Left lung (tissue), 14 donors: ENCODE measurements at regions of chr11 and their contacts with region 1.

Region 1: DNA sequence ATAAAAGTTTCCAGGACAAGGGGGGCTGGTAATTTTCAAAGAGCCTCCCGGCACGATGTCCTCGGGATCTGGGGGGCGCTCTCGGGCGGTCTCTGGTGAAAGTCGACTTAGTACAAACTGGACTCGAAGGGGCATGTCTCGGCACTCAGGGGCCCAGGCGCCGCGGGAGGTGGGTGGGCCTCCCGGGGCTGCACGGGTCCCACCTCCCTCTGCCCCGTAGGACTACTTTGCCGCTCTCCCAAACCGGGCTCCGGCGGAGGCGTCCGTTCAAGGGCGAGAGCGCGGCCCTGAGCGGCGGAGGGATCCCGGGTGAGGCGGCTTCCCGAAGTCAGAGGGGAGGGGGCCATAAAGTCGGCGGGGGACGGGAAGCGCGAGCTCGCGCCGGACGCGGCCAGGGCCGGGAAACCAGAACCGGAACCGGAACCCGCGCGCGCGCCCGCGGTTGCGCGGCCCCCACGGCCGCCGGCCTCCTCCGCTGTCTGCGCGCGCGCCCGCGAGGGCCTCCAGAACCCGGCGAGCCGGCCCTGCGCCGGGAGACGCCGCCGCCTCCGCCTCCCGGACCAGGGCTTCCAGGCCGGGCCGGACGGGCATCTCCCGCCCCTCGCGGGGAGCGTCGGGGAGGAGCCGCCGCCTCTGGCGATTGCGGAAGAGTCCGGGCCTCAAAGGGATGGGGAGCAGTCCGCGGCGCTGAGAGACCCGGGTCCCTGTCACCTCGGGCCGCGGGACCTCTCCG is at the start of gene ARHGEF12:
- DNase-seq: peak; percentile 94 to 98 (median 96)
- ATAC-seq: peak; percentile 75
- H3K4me3 ChIP-seq: peak within 1 kb of the TSS; percentile 68 to 79
- H3K27ac ChIP-seq: peak within 1 kb of the TSS; percentile 91 to 97
- H3K4me1 ChIP-seq: peaks cover 15 to 37% of the 10 kb centered on the region in 2 donors
- H3K27me3 ChIP-seq: peaks cover 0 to 87% of the 10 kb centered on the region in 2 donors
- CTCF ChIP-seq: no peak
- polyA plus RNA-seq, gene ARHGEF12: 91.4 to 108 (median 97.4) TPM

Region 2: DNA sequence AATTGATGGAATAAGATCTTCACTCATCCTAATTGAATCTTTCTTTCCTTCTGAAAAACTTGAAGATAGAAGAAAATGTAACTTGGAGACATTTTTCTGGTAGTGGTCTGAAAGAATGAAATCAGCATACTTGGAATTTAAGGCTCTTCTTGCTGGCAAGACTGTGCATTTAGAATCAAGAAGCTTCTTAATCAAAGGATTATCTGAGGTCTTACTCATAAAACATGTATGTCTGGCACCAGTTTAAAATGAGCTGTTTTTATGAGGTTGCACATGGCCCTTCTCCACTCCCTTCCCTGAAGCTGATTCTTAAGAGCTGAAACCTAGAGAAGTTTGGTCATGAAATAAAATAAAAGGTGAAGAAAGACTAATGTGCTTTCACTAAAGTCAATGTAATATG is 77.4 kb after region 1 on chr11:
- intact Hi-C with region 1: loop called in 1 of 2 experiments (anchors 10 kb)
- DNase-seq: no peak
- ATAC-seq: no peak
- H3K4me3 ChIP-seq: no peak overlapping the region
- H3K27ac ChIP-seq: no peak overlapping the region
- H3K4me1 ChIP-seq: peaks cover 0 to 5% of the 10 kb centered on the region in 2 donors
- H3K27me3 ChIP-seq: no peaks in the 10 kb centered on the region
- CTCF ChIP-seq: no peak

Region 3: GRCh38 chr11:120494595-120494994 is 158.5 kb after region 1 on chr11:
- intact Hi-C with region 1: loop called in 1 of 2 experiments (anchors 10 kb)
- DNase-seq: no peak
- ATAC-seq: no peak
- H3K4me3 ChIP-seq: no peak overlapping the region
- H3K27ac ChIP-seq: no peak overlapping the region
- H3K4me1 ChIP-seq: no peaks in the 10 kb centered on the region
- H3K27me3 ChIP-seq: peaks cover 0 to 7% of the 10 kb centered on the region in 2 donors
- CTCF ChIP-seq: no peak

Region 4: GRCh38 chr11:120682866-120683265 is 346.8 kb after region 1 on chr11:
- intact Hi-C with region 1: loop called in 1 of 2 experiments (anchors 10 kb)
- DNase-seq: no peak
- ATAC-seq: no peak
- H3K4me3 ChIP-seq: no peak overlapping the region
- H3K27ac ChIP-seq: no peak overlapping the region
- H3K4me1 ChIP-seq: no peaks in the 10 kb centered on the region
- H3K27me3 ChIP-seq: peaks cover 0 to 23% of the 10 kb centered on the region in 2 donors
- CTCF ChIP-seq: no peak